Posterior vena cava (tissue), 2 donors: ENCODE measurements at regions of chr9 and their contacts with region 1.

Region 1: DNA sequence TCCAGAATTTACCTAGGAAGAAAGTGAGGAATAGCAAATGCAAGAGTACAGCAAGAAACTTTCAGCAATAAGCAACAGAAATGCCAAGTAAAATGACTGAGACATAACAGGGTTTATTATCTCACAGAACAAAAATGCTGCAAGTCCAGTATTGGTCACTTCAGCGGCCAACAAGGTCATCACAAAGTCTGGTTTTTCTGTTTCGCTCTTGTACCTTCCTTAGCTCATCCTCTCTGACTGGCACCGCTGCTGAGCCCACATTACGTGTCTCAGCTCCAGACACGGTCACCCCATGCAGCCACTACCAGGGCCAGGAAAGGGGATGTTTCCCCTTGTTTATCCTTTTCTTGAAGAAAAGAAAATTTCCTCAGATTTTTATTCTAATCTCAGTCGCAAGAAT is 82.6 kb downstream of the RFK start:
- DNase-seq: no peak

Region 2: DNA sequence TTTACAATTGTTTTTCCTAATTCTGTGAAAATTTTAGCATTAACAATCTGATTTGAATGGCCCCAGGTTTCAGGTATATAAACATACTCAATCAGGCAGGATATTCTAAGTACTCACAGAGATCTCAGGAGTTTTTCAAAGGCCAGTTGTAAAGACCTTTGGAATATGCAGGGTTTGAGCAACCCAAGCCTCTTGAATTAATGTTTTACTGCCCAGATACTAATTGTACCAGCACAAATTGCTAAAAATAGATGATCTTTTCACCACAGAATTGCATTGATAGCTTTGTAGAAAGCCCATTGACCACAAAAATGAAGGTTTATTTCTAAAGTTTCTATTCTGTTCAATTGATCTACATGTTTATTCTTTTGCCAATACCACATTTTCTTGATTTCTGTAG is 1036.8 kb before region 1 on chr9:
- intact Hi-C with region 1: loop called in 1 of 2 experiments (anchors 5 kb)
- DNase-seq: no peak